ENCODE measurements at regions of chr6 and their contacts with region 1.

Region 1: DNA sequence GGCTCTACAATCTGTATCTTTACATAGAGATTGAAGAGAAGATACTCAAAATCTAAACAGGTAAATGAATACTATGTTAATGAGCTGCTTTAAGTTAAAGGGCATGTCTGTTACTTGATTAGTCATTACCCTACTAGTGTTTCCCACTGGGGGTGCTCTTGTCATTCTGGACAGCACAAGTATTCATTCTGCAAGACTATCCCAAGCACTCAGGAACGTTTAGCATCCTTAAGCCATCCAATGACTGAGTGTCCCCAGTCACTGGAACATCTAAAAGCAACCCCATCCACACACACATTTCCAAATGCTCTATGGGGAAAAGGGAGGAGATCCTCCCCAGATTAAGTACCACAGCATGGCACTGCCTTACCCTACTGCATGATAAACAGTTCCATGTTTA is 25.7 kb downstream of the EZR start:
- DNase-seq: no peak
- H3K4me3 Mint-ChIP-seq: no peak overlapping the region
- H3K27ac Mint-ChIP-seq: peak overlapping the region; percentile 22
- H3K4me1 Mint-ChIP-seq: peaks cover 78% of the 10 kb centered on the region
- H3K27me3 Mint-ChIP-seq: no peaks in the 10 kb centered on the region

Region 2: DNA sequence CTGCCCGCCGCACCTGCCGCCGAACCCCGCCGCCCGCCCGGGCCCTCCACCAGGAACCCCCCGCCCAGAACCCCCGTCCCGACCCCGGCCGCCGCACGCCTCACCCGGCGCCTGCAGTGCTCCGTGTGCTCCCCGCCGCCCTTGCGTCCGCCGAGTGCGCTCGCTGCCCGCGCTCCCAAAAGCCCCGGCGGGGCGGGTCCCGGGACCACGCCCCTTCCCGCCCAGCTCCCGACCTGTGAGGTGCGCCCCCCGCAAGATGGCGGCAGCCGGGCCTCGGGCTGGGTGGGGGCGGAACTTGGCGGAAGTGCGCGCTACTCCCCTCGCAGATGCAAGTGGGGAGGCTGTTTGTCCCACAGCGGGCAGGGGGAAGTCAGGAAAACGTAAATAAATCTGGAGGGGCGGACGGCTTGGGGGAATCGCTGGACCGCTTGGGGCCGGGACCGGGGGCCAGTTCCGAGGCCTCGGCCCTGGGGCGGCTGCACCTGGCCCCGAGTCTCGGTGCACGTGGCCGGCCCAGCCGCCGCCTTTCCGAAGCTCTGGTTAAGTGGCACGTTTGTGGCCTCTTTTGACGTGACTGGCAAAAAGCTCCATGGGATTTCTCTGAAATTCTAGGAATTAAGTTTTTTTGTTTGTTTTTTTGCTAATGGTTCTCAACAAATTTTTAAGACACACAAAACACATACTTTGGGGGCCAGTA is 25.9 kb after region 1 on chr6 and contains the start of gene EZR:
- intact Hi-C with region 1: no loop called
- DNase-seq: peak; percentile 71
- H3K4me3 Mint-ChIP-seq: peak within 1 kb of the TSS; percentile 99
- H3K27ac Mint-ChIP-seq: peak within 1 kb of the TSS; percentile 89
- H3K4me1 Mint-ChIP-seq: peaks cover 42% of the 10 kb centered on the region
- H3K27me3 Mint-ChIP-seq: no peaks in the 10 kb centered on the region
- total RNA-seq, gene EZR: 204 and 206 TPM in 2 replicates

Region 3: GRCh38 chr6:158972241-158973233 is 179.1 kb after region 1 on chr6:
- intact Hi-C with region 1: loop called (anchors 1 kb)
- DNase-seq: no peak
- H3K4me3 Mint-ChIP-seq: no peak overlapping the region
- H3K27ac Mint-ChIP-seq: no peak overlapping the region
- H3K4me1 Mint-ChIP-seq: peaks cover 5% of the 10 kb centered on the region
- H3K27me3 Mint-ChIP-seq: no peaks in the 10 kb centered on the region

Region 4: DNA sequence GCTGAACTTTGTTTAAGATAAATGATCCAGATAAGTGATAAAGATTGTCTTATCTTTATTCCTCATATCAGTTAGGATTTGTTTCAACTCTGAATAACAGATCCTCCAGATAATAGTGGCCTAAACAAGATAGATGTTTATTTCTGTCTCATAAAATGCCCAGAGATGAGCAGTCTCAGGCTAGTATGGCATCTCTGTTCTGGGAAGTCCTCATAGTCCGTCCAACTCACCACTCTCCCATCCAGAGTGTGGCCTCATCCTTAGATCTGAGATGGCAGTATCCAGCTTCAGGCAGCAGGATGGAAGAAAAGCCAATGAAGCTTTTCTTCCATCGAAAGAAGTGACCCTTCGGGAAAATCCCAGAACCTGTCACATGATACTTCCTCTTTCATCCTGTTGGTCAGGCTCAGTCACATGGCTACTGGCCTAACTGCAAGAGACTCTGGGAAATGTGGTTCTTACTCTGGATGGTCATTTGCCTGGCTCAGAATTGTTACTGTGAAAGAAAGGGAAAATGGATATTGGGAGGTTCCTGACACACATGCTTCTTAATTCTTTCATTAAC is 280.8 kb after region 1 on chr6:
- intact Hi-C with region 1: no loop called
- DNase-seq: no peak
- H3K4me3 Mint-ChIP-seq: no peak overlapping the region
- H3K27ac Mint-ChIP-seq: no peak overlapping the region
- H3K4me1 Mint-ChIP-seq: peaks cover 44% of the 10 kb centered on the region
- H3K27me3 Mint-ChIP-seq: no peaks in the 10 kb centered on the region

Region 5: DNA sequence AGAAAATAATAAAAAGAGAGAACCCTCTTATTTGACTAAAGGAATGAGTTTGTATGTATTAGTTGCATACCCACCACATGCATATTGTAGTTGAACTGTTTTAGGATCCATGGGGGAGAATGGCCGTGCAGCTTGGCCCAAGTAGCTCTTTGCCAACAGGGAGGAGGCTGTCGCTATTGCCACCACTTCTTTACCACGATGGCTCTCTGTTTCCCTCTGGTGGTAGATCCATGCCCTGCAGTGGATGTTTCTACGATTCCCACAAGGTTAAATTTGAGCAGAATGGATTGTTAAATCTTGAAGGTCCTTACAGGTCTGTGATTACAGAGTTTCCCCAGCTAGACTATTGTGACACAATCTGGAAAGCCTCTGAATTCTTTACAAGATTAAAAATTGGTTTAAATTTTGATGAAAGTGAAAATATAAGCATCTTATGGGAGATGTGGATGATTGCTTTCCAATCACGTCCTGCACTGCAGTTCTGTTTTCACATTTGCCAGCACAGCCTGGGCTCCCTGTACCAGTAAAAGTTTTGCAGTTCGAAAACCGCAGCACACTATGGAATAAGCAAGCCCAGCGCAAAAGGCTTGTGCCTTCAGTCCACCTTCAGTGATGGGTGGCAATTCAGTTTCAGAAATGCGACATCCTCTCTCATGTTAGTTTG is 341.4 kb after region 1 on chr6:
- intact Hi-C with region 1: loop called (anchors 10 kb)
- DNase-seq: peak; percentile 64
- H3K4me3 Mint-ChIP-seq: no peak overlapping the region
- H3K27ac Mint-ChIP-seq: no peak overlapping the region
- H3K4me1 Mint-ChIP-seq: peaks cover 4% of the 10 kb centered on the region
- H3K27me3 Mint-ChIP-seq: peaks cover 23% of the 10 kb centered on the region

Region 6: GRCh38 chr6:159463119-159463829 is 669.8 kb after region 1 on chr6:
- intact Hi-C with region 1: loop called (anchors 10 kb)
- DNase-seq: no peak
- H3K4me3 Mint-ChIP-seq: no peak overlapping the region
- H3K27ac Mint-ChIP-seq: no peak overlapping the region
- H3K4me1 Mint-ChIP-seq: peaks cover 4% of the 10 kb centered on the region
- H3K27me3 Mint-ChIP-seq: peaks cover 11% of the 10 kb centered on the region